ENCODE measurements at regions of chr12 and their contacts with region 1.

Region 1: GRCh38 chr12:27652174-27652763 is 44.0 kb upstream of the REP15 start:
- DNase-seq: peak; percentile 38
- H3K4me3 Mint-ChIP-seq: no peak overlapping the region
- H3K27ac Mint-ChIP-seq: no peak overlapping the region
- H3K4me1 Mint-ChIP-seq: peaks cover 10% of the 10 kb centered on the region
- H3K27me3 Mint-ChIP-seq: no peaks in the 10 kb centered on the region

Region 2: GRCh38 chr12:27667540-27667939 is 15.3 kb after region 1 on chr12:
- CTCF ChIA-PET with region 1: interaction called, 15 read pairs
- DNase-seq: no peak
- H3K4me3 Mint-ChIP-seq: no peak overlapping the region
- H3K27ac Mint-ChIP-seq: no peak overlapping the region
- H3K4me1 Mint-ChIP-seq: no peaks in the 10 kb centered on the region
- H3K27me3 Mint-ChIP-seq: no peaks in the 10 kb centered on the region

Region 3: GRCh38 chr12:27924350-27925135 is 272.3 kb after region 1 on chr12:
- CTCF ChIA-PET with region 1: no interaction called
- DNase-seq: no peak
- H3K4me3 Mint-ChIP-seq: no peak overlapping the region
- H3K27ac Mint-ChIP-seq: no peak overlapping the region
- H3K4me1 Mint-ChIP-seq: no peaks in the 10 kb centered on the region
- H3K27me3 Mint-ChIP-seq: peaks cover 4% of the 10 kb centered on the region